CD4-positive, alpha-beta T cell (primary cell): ENCODE measurements at regions of chr13 and their contacts with region 1.

Region 1: DNA sequence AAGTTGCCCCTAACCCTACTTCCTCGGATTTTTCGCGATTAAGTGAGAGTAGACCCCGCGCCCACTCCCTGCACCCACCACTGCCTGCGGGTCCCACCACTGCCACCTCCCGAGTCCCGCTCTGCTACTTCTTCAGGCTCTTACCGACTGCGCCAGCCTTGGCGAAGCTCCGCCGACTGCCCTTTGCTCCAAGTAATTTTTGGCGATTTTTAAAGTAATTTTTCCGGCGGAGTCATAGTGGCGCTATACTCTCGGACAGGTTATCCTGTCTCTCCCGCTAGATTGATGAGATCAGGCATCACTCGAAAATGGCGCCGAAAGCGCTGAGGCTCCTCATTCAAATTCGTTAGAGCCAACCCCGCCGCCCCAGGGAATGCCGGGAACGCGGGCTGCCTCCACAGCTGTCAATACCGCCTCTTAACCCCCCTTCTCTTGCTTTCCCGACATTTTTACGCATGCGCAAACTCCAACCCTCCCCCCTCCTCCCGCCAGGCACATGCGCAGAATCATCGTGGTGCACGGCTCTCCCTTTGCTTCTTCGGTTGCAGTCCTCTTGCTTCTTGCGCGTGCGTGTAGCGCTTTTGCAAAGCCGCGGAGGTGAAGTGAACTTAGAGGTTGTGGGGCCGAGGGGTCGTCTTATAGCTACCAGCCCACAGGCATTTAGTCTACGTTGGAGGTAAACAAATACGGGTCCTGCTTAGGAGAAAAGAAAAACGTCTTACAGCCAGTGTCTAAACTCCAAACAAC is 66.6 kb downstream of the KCNRG start:
- DNase-seq: peak; percentile 97 to 99 (median 98)
- ATAC-seq: peak; percentile 70
- H3K4me3 ChIP-seq: peak overlapping the region; percentile 78
- H3K4me3 Mint-ChIP-seq: peak overlapping the region; percentile 98
- H3K27ac ChIP-seq: peak overlapping the region; percentile 47 to 77
- H3K27ac Mint-ChIP-seq: peak overlapping the region; percentile 91
- H3K4me1 ChIP-seq: peaks cover 27% of the 10 kb centered on the region
- H3K4me1 Mint-ChIP-seq: peaks cover 58% of the 10 kb centered on the region
- H3K27me3 ChIP-seq: no peaks in the 10 kb centered on the region
- H3K27me3 Mint-ChIP-seq: peaks cover 24% of the 10 kb centered on the region
- CTCF ChIP-seq: no peak

Region 2: DNA sequence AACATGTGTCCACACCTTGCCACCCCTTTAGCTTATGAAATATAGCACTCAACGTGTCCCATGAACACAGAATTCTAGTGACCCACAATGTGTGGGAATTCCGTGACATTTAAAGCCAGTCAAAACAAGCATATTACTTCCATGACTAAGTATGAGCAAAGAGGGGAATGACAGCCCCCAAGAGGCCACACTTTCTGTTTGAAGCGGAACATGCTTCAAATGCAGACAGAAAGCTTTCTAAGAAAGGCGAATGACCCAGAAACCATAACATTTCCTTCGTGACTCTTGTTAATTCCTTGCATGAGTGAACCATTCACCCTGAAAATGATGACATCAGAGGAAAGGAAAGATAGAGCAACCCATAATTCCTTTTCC is 1228.1 kb before region 1 on chr13:
- CTCF ChIA-PET with region 1: no interaction called
- POLR2A ChIA-PET with region 1: no interaction called
- intact Hi-C with region 1: no loop called
- DNase-seq: peak in 1 of 14 experiments; percentile 11
- ATAC-seq: no peak
- H3K4me3 ChIP-seq: no peak overlapping the region
- H3K4me3 Mint-ChIP-seq: no peak overlapping the region
- H3K27ac ChIP-seq: no peak overlapping the region
- H3K27ac Mint-ChIP-seq: no peak overlapping the region
- H3K4me1 ChIP-seq: no peaks in the 10 kb centered on the region
- H3K4me1 Mint-ChIP-seq: peaks cover 13% of the 10 kb centered on the region
- H3K27me3 ChIP-seq: no peaks in the 10 kb centered on the region
- H3K27me3 Mint-ChIP-seq: no peaks in the 10 kb centered on the region
- CTCF ChIP-seq: no peak

Region 3: GRCh38 chr13:49996951-49997895 is 84.6 kb before region 1 on chr13 and contains the start of gene TRIM13:
- CTCF ChIA-PET with region 1: interaction called, 57 read pairs
- POLR2A ChIA-PET with region 1: interaction called, 209 read pairs
- intact Hi-C with region 1: loop called (anchors 1 to 2 kb)
- DNase-seq: peak; percentile 72 to 91 (median 80)
- ATAC-seq: peak; percentile 83
- H3K4me3 ChIP-seq: peak within 1 kb of the TSS; percentile 96
- H3K4me3 Mint-ChIP-seq: peak within 1 kb of the TSS; percentile 97
- H3K27ac ChIP-seq: peak within 1 kb of the TSS; percentile 91
- H3K27ac Mint-ChIP-seq: peak within 1 kb of the TSS; percentile 90
- H3K4me1 ChIP-seq: peaks cover 32% of the 10 kb centered on the region
- H3K4me1 Mint-ChIP-seq: peaks cover 56% of the 10 kb centered on the region
- H3K27me3 ChIP-seq: no peaks in the 10 kb centered on the region
- H3K27me3 Mint-ChIP-seq: no peaks in the 10 kb centered on the region
- CTCF ChIP-seq: peak; percentile 95
- total RNA-seq, gene TRIM13: 32.5 to 32.9 TPM

Region 4: DNA sequence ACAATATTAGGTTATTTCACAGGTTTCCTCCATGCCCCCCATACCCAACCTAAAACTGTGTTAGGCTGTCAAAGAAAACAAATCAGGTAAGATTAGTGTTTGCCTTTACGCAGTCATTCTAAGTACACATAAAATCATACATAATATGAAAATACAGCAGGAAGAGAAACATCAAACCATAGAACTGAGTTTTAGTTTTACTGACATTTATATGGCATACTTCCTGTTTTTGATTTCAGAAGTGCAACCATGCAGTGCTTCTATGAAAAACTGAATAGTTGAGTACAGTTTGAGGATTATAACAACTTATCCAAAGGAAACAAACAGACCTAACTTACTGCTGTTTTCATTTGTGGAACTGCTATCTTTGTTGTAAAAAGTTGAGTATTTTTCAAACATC is 24.7 kb after region 1 on chr13:
- CTCF ChIA-PET with region 1: interaction called, 7 read pairs
- POLR2A ChIA-PET with region 1: interaction called, 14 read pairs
- intact Hi-C with region 1: loop called in 1 of 2 experiments (anchors 2 kb)
- DNase-seq: peak in 1 of 14 experiments; percentile 20
- ATAC-seq: peak; percentile 51
- H3K4me3 ChIP-seq: no peak overlapping the region
- H3K4me3 Mint-ChIP-seq: peak overlapping the region; percentile 61
- H3K27ac ChIP-seq: peak overlapping the region in 1 of 2 donors; percentile 64
- H3K27ac Mint-ChIP-seq: peak overlapping the region; percentile 76
- H3K4me1 ChIP-seq: no peaks in the 10 kb centered on the region
- H3K4me1 Mint-ChIP-seq: peaks cover 60% of the 10 kb centered on the region
- H3K27me3 ChIP-seq: no peaks in the 10 kb centered on the region
- H3K27me3 Mint-ChIP-seq: no peaks in the 10 kb centered on the region
- CTCF ChIP-seq: no peak

Region 5: GRCh38 chr13:50236898-50237318 is 155.1 kb after region 1 on chr13:
- CTCF ChIA-PET with region 1: no interaction called
- POLR2A ChIA-PET with region 1: interaction called, 5 read pairs
- intact Hi-C with region 1: loop called in 1 of 2 experiments (anchors 5 kb)
- DNase-seq: peak in 6 of 14 experiments; percentile 5 to 79 (median 56)
- ATAC-seq: peak; percentile 91
- H3K4me3 ChIP-seq: peak overlapping the region; percentile 47
- H3K4me3 Mint-ChIP-seq: peak overlapping the region; percentile 78
- H3K27ac ChIP-seq: peak overlapping the region in 1 of 2 donors; percentile 56
- H3K27ac Mint-ChIP-seq: peak overlapping the region; percentile 67
- H3K4me1 ChIP-seq: peaks cover 11% of the 10 kb centered on the region
- H3K4me1 Mint-ChIP-seq: peaks cover 32% of the 10 kb centered on the region
- H3K27me3 ChIP-seq: no peaks in the 10 kb centered on the region
- H3K27me3 Mint-ChIP-seq: no peaks in the 10 kb centered on the region
- CTCF ChIP-seq: no peak

Region 6: GRCh38 chr13:50531917-50532899 is 450.4 kb after region 1 on chr13:
- CTCF ChIA-PET with region 1: no interaction called
- POLR2A ChIA-PET with region 1: interaction called, 3 read pairs
- intact Hi-C with region 1: loop called in 1 of 2 experiments (anchors 10 kb)
- DNase-seq: peak in 3 of 14 experiments; percentile 23 to 37 (median 26)
- ATAC-seq: no peak
- H3K4me3 ChIP-seq: no peak overlapping the region
- H3K4me3 Mint-ChIP-seq: no peak overlapping the region
- H3K27ac ChIP-seq: no peak overlapping the region
- H3K27ac Mint-ChIP-seq: no peak overlapping the region
- H3K4me1 ChIP-seq: peaks cover 12% of the 10 kb centered on the region
- H3K4me1 Mint-ChIP-seq: peaks cover 25% of the 10 kb centered on the region
- H3K27me3 ChIP-seq: no peaks in the 10 kb centered on the region
- H3K27me3 Mint-ChIP-seq: no peaks in the 10 kb centered on the region
- CTCF ChIP-seq: peak; percentile 42

Region 7: DNA sequence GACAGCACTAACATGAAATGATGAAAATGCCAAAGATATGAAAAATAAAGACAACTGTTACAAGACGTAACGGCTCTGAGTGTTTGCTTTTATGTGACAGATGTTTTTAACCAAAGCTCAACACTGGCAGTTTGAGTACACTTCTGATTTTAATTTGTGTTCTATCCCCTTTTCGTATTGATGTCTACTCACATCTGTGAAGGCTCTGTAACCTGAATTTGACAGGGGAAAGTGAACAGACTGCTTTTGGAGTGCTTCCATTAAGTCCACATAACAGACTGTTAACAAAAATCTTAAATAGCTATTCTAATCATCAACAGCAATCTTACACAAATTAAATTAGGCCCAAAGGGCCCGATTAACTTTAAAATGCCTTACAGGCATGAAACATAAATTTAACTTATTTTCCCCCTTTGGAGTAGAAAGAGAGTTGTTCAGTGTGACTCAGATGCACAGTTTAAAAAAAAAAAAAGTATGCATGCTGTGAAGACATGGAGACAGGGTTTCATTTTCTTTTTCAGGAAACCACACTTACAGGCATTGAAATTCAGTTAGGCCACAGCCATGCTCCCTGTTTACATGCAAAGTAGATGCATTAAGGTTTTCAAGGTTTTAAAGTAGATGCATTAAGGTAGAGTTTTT is 811.5 kb after region 1 on chr13:
- CTCF ChIA-PET with region 1: no interaction called
- POLR2A ChIA-PET with region 1: interaction called, 14 read pairs
- intact Hi-C with region 1: no loop called
- DNase-seq: peak in 5 of 14 experiments; percentile 22 to 83 (median 71)
- ATAC-seq: peak; percentile 92
- H3K4me3 ChIP-seq: peak overlapping the region; percentile 28
- H3K4me3 Mint-ChIP-seq: peak overlapping the region; percentile 83
- H3K27ac ChIP-seq: peak overlapping the region; percentile 66 to 81
- H3K27ac Mint-ChIP-seq: peak overlapping the region; percentile 84
- H3K4me1 ChIP-seq: peaks cover 19% of the 10 kb centered on the region
- H3K4me1 Mint-ChIP-seq: peaks cover 43% of the 10 kb centered on the region
- H3K27me3 ChIP-seq: no peaks in the 10 kb centered on the region
- H3K27me3 Mint-ChIP-seq: no peaks in the 10 kb centered on the region
- CTCF ChIP-seq: no peak